Heart left ventricle (tissue), 16 donors: ENCODE measurements at regions of chrX and their contacts with region 1.

Region 1: DNA sequence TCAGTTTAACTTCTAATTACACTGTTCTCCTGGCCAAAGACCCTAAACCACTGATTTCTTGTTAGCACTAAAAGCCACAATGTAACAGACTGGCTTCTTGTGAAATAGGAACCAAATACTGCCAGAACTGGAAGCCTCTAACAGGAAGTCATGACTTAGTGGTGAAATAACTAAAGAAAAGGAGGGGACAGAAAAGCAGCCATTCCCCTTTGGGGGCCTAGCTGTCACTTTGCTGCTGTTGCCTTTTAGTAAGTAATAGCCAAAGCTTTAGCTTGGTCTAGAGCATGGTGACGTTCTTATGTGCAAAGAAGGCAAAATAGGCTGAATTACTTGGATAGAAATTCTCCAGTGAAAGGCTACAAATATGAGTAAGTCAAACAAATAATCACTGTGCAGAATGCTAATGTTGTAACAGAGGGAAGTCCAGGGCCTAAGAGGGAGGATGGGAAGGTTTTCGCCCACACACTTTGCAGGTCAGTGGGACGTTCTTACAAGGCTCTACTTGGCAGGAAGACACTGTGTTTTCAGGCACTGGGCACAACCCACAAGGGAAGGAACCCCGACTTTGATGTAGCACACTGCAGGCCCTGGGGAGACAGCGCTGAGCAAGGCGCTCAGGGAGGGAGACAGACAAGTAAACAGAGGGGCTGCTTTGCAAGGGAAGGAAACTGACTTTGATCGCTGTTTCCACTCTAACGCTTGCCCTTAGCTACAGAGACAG is 16.7 kb downstream of the GAB3 start:
- DNase-seq: peak; percentile 33 to 65 (median 40)
- ATAC-seq: peak; percentile 13 to 60 (median 30)
- H3K4me3 ChIP-seq: peak overlapping the region in 1 of 12 donors; percentile 30
- H3K27ac ChIP-seq: peak overlapping the region; percentile 58 to 92 (median 79)
- H3K4me1 ChIP-seq: peaks cover 9 to 100% (median 92%) of the 10 kb centered on the region in 12 donors
- H3K27me3 ChIP-seq: no peaks in the 10 kb centered on the region
- CTCF ChIP-seq: no peak
- POLR2A ChIP-seq: no peak

Region 2: GRCh38 chrX:154695911-154696675 is 38.1 kb before region 1 on chrX:
- intact Hi-C with region 1: loop called in 1 of 10 experiments (anchors 5 kb)
- DNase-seq: peak in 2 of 5 donors; percentile 29
- ATAC-seq: peak; percentile 37 to 64 (median 50)
- H3K4me3 ChIP-seq: no peak overlapping the region
- H3K27ac ChIP-seq: peak overlapping the region in 11 of 12 donors; percentile 10 to 67 (median 51)
- H3K4me1 ChIP-seq: peaks cover 0 to 35% (median 14%) of the 10 kb centered on the region in 12 donors
- H3K27me3 ChIP-seq: peaks cover 0 to 4% (median 0%) of the 10 kb centered on the region in 9 donors
- CTCF ChIP-seq: no peak
- POLR2A ChIP-seq: no peak

Region 3: GRCh38 chrX:154714925-154715324 is 19.3 kb before region 1 on chrX:
- intact Hi-C with region 1: no loop called
- DNase-seq: no peak
- ATAC-seq: peak in 3 of 4 donors; percentile 59 to 73 (median 70)
- H3K4me3 ChIP-seq: no peak overlapping the region
- H3K27ac ChIP-seq: no peak overlapping the region
- H3K4me1 ChIP-seq: peaks cover 0 to 63% (median 35%) of the 10 kb centered on the region in 12 donors
- H3K27me3 ChIP-seq: peaks cover 0 to 6% (median 0%) of the 10 kb centered on the region in 9 donors
- CTCF ChIP-seq: peak; percentile 55 to 86 (median 70)
- POLR2A ChIP-seq: no peak

Region 4: GRCh38 chrX:154980330-154981096 is 246.3 kb after region 1 on chrX:
- intact Hi-C with region 1: no loop called
- DNase-seq: peak; percentile 56 to 72 (median 65)
- ATAC-seq: peak in 3 of 4 donors; percentile 88 to 91 (median 91)
- H3K4me3 ChIP-seq: peak overlapping the region in 10 of 12 donors; percentile 29 to 56 (median 42)
- H3K27ac ChIP-seq: peak overlapping the region in 1 of 12 donors; percentile 17
- H3K4me1 ChIP-seq: no peaks in the 10 kb centered on the region
- H3K27me3 ChIP-seq: no peaks in the 10 kb centered on the region
- CTCF ChIP-seq: peak; percentile 47 to 70 (median 65)
- POLR2A ChIP-seq: no peak

Region 5: GRCh38 chrX:155001873-155002272 is 267.7 kb after region 1 on chrX:
- intact Hi-C with region 1: no loop called
- DNase-seq: no peak
- ATAC-seq: no peak
- H3K4me3 ChIP-seq: no peak overlapping the region
- H3K27ac ChIP-seq: no peak overlapping the region
- H3K4me1 ChIP-seq: peaks cover 0 to 11% (median 4%) of the 10 kb centered on the region in 12 donors
- H3K27me3 ChIP-seq: no peaks in the 10 kb centered on the region
- CTCF ChIP-seq: no peak
- POLR2A ChIP-seq: no peak